OCI-LY7 (cell line): ENCODE measurements at regions of chr4 and their contacts with region 1.

Region 1: GRCh38 chr4:1693129-1693896 is 9.2 kb upstream of the FAM53A start:
- DNase-seq: peak; percentile 85
- H3K4me3 ChIP-seq: no peak overlapping the region
- H3K27ac ChIP-seq: peak overlapping the region; percentile 34
- H3K4me1 ChIP-seq: no peaks in the 10 kb centered on the region
- CTCF ChIP-seq: peak; percentile 100

Region 2: GRCh38 chr4:1726146-1726934 is 33.0 kb after region 1 on chr4:
- CTCF ChIA-PET with region 1: interaction called, 3 read pairs
- POLR2A ChIA-PET with region 1: interaction called, 5 read pairs
- intact Hi-C with region 1: loop called (anchors 1 kb)
- DNase-seq: peak; percentile 83
- H3K4me3 ChIP-seq: no peak overlapping the region
- H3K27ac ChIP-seq: no peak overlapping the region
- H3K4me1 ChIP-seq: peaks cover 39% of the 10 kb centered on the region
- CTCF ChIP-seq: peak; percentile 98